ENCODE measurements at regions of chr12 and their contacts with region 1.

Region 1: DNA sequence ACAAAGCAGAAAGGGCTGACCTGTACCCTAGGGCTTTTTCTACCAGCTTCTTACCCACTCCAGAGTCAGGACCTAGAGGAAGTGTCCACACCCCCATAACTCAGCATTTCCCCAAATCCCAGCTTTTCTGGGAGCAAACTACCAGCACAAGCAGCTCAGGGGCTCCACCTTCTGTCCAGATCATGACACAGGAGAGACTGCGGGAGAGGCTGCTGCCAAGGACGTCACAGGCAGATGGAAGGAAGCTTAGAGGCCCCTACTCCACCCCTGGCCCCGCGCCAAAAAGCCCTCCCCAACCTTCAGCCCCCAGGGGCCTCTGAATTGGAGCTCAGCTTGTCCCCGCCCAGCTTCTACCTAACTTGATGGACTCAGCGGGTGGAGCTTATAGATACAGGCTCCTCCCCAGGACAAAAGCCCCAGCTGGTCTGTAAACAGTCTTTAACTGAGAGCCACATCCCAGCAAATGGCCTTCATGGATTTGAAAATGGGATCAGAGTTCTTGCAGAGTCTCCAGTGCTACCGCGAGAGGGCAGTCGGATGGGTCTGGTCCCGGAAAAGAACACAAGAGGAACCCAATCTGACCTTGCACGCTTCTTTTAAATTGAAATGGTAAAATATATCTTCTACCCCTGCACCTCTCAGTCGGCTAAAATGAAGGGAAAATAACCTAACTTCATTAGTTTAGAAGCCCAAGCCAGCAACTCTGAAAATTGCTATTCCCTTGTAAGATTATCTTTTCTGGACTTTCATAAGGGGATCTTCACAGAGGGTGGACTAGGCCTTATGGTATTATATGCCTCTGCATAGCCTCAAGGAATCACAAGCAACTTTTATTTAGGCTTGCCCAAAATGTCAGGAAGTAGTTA is 6.8 kb upstream of the BAZ2A start:
- DNase-seq: peak; percentile 96
- H3K4me3 Mint-ChIP-seq: peak overlapping the region; percentile 99
- H3K27ac Mint-ChIP-seq: peak overlapping the region; percentile 93
- H3K4me1 Mint-ChIP-seq: peaks cover 60% of the 10 kb centered on the region
- H3K27me3 Mint-ChIP-seq: no peaks in the 10 kb centered on the region

Region 2: DNA sequence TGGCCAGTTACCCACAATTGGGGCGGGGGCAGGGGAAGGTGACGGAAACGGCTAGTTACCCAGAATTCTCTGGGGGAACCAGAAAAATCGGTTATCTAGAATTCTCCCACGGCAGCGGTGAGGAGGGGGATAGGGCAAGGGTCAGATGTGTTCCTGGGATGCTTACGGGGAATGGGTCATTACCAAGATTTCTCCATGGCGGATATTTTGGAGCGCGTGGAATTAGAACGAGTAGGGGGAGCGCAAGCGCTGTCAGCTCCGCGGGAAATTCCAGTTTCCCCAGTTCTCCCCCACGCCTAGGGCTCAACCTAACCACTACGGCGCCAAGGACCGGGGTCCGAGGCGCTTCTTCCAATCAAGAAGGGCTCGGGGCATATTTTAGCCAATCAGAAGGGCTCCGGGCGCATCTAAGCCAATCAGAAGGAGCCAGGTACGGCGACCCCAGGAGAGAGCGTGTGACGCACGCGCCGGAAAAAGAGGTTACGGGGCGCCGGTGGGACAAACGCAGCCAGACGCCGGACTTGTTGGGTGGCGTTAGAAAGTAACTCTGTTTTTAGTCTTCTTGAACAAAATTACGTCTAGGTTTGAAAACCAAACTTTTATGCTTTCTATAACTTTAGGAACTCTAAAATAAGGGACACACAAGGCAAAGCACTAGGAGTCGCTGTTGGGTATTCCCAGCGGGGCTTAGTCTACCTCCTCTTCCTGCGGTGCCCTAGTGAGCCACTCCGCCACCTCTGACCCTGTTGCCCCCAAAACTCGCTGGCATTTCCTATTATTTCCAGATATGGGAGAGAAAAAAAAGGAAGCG is 303.0 kb before region 1 on chr12 and contains the start of gene PAN2:
- intact Hi-C with region 1: loop called (anchors 10 kb)
- DNase-seq: peak; percentile 98
- H3K4me3 Mint-ChIP-seq: peak within 1 kb of the TSS; percentile 88
- H3K27ac Mint-ChIP-seq: peak within 1 kb of the TSS; percentile 99
- H3K4me1 Mint-ChIP-seq: peaks cover 42% of the 10 kb centered on the region
- H3K27me3 Mint-ChIP-seq: no peaks in the 10 kb centered on the region
- total RNA-seq, gene PAN2: 31.3 and 34.7 TPM in 2 replicates

Region 3: DNA sequence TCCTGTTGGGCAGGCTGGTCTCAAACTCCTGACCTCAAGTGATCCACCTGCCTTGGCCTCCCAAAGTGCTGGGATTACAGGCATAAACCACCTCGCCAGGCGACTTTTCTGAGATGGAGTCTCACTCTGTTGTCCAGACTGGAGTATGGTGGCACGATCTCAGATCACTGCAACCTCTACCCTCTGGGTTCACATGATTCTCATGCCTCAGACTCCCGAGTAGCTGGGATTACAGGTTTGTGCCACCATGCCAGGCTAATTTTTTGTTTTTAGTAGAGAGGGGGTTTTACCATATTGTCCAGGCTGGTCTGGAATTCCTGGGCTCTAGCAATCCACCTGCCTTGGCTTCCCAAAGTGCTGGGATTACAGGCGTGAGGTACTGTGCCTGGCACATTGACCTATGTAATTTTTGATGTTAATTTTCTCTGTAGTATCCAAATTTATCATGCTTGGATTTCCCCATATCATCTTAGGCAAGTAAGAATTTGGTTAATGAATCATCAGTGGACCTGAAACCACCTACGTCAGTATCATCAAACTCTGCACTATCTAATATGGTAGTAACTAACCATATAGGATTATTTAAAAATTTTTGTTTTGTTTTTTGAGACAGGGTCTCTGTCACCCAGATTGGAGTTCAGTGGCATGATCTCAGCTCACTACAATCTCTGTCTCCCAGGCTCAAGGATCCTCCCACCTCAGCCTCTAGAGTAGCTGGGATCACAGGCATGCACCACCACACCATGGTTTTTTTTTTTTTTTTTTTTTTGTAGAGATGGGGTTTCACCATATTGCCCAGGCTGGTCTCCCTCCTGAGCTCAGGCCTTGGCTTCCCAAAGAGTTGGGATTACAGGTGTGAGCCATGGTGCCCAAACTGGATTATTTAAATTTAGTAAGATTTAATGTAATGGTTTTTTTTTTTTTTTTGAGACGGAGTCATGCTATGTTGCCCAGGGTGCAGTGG is 20.8 kb after region 1 on chr12:
- intact Hi-C with region 1: no loop called
- DNase-seq: no peak
- H3K4me3 Mint-ChIP-seq: peak overlapping the region; percentile 30
- H3K27ac Mint-ChIP-seq: peak overlapping the region; percentile 73
- H3K4me1 Mint-ChIP-seq: peaks cover 4% of the 10 kb centered on the region
- H3K27me3 Mint-ChIP-seq: no peaks in the 10 kb centered on the region

Region 4: GRCh38 chr12:56688129-56688845 is 51.4 kb after region 1 on chr12 and contains the start of gene PTGES3:
- intact Hi-C with region 1: loop called (anchors 2 kb)
- DNase-seq: peak; percentile 99
- H3K4me3 Mint-ChIP-seq: peak within 1 kb of the TSS; percentile 99
- H3K27ac Mint-ChIP-seq: peak within 1 kb of the TSS; percentile 97
- H3K4me1 Mint-ChIP-seq: peaks cover 24% of the 10 kb centered on the region
- H3K27me3 Mint-ChIP-seq: no peaks in the 10 kb centered on the region
- total RNA-seq, gene PTGES3: 351 and 357 TPM in 2 replicates

Region 5: DNA sequence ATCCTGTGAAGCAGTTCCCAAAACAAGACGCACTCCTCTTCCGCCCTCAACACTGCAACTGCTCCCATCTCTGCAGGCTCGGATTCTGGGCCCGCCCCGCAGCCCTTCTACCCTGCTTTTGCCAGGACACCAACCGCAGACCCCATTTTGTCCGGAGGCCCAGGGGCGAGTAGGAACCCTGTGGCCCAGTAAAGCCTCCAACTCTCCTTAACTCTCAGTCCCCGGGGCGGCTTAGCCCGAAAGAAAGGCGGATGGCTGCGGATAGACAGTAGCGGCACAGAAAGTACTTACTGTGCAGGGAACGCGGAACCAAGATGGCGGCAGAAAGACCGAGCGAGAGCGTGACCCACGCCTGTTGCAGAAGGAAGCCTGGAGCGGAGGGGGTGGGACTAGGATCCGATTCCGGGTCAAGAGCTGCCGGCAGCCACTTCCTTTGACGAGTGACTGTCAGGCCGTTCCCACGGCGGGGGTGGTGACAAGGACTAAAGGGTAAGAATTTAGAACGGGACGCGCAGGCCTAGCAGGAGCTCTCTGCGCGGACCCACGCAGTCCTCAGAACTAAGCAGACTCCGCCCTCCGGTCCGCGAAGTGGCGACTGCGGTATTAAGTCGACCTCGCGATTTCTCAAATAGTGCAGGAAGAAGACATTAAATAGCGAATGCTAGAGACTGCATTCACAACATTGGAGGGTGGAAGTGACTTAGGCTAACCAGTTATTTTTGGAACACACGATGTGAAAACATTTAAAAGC is 88.2 kb after region 1 on chr12 and contains the start of gene NACA:
- intact Hi-C with region 1: loop called (anchors 2 kb)
- DNase-seq: peak; percentile 99
- H3K4me3 Mint-ChIP-seq: peak within 1 kb of the TSS; percentile 99
- H3K27ac Mint-ChIP-seq: peak within 1 kb of the TSS; percentile 100
- H3K4me1 Mint-ChIP-seq: peaks cover 43% of the 10 kb centered on the region
- H3K27me3 Mint-ChIP-seq: no peaks in the 10 kb centered on the region
- total RNA-seq, gene NACA: 1,041 and 1,057 TPM in 2 replicates

Region 6: GRCh38 chr12:56792678-56793077 is 155.8 kb after region 1 on chr12:
- intact Hi-C with region 1: no loop called
- DNase-seq: no peak
- H3K4me3 Mint-ChIP-seq: no peak overlapping the region
- H3K27ac Mint-ChIP-seq: no peak overlapping the region
- H3K4me1 Mint-ChIP-seq: no peaks in the 10 kb centered on the region
- H3K27me3 Mint-ChIP-seq: peaks cover 2% of the 10 kb centered on the region

Region 7: GRCh38 chr12:57005980-57006808 is 369.3 kb after region 1 on chr12 and contains the start of gene ZBTB39:
- intact Hi-C with region 1: loop called (anchors 10 kb)
- DNase-seq: peak; percentile 92
- H3K4me3 Mint-ChIP-seq: peak within 1 kb of the TSS; percentile 93
- H3K27ac Mint-ChIP-seq: peak within 1 kb of the TSS; percentile 86
- H3K4me1 Mint-ChIP-seq: peaks cover 44% of the 10 kb centered on the region
- H3K27me3 Mint-ChIP-seq: no peaks in the 10 kb centered on the region
- total RNA-seq, gene ZBTB39: 11.0 TPM in 2 replicates

Region 8: GRCh38 chr12:57088459-57089248 is 451.7 kb after region 1 on chr12 and contains the start of gene NAB2:
- intact Hi-C with region 1: loop called (anchors 5 kb)
- DNase-seq: peak; percentile 98
- H3K4me3 Mint-ChIP-seq: peak within 1 kb of the TSS; percentile 96
- H3K27ac Mint-ChIP-seq: peak within 1 kb of the TSS; percentile 97
- H3K4me1 Mint-ChIP-seq: peaks cover 68% of the 10 kb centered on the region
- H3K27me3 Mint-ChIP-seq: no peaks in the 10 kb centered on the region
- total RNA-seq, gene NAB2: 70.5 and 76.7 TPM in 2 replicates

Region 9: GRCh38 chr12:57238854-57239554 is 602.1 kb after region 1 on chr12:
- intact Hi-C with region 1: loop called (anchors 10 kb)
- DNase-seq: peak; percentile 97
- H3K4me3 Mint-ChIP-seq: peak overlapping the region; percentile 92
- H3K27ac Mint-ChIP-seq: peak overlapping the region; percentile 91
- H3K4me1 Mint-ChIP-seq: peaks cover 64% of the 10 kb centered on the region
- H3K27me3 Mint-ChIP-seq: peaks cover 41% of the 10 kb centered on the region